PC-9 (cell line): ENCODE measurements at regions of chr4 and their contacts with region 1.

Region 1: GRCh38 chr4:112296949-112297880 is at the start of gene ALPK1:
- DNase-seq: peak; percentile 6 to 87
- H3K4me3 ChIP-seq: peak within 1 kb of the TSS; percentile 59
- H3K27ac ChIP-seq: peak within 1 kb of the TSS; percentile 87
- H3K4me1 ChIP-seq: peaks cover 9% of the 10 kb centered on the region
- H3K27me3 ChIP-seq: no peaks in the 10 kb centered on the region
- CTCF ChIP-seq: no peak
- total RNA-seq, gene ALPK1: 31.0 and 35.4 TPM in 2 replicates

Region 2: DNA sequence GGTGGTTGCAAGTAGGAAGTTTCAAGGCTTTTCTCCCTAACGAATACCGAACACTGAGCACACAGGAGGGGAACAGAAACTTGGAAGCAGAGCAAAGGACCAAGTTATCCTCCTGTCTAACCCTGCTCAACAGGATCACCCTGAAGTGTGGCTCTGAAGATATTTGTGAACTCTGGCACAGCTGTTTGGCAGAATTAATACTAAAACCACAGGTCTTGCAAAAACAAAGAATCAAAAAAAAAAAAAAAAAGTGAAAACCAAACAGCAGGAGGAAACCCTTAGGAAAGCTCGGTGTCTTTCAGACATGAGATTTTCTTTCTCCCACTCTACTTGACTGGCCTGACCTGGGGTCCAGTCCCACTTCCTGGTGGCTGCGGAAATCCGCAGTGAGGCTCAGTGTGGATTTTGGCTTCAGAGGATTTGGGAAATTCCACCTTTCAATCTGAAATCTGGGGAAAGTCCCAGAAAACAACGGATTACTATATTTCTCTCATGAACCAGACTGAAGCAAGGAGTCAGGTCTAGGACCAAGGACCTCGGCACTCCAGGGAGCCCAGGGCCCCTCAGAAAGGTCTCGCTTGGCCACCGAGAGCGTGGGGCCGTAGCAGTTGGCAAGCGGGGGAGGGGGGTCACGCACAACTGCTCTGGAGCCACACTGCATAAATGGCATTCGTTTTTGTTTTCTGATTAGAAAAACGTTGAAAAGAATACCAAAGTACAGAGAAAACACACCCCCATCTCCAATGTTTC is 12.4 kb before region 1 on chr4:
- CTCF ChIA-PET with region 1: no interaction called
- POLR2A ChIA-PET with region 1: interaction called, 23 read pairs
- intact Hi-C with region 1: no loop called
- DNase-seq: peak; percentile 16 to 72
- H3K4me3 ChIP-seq: peak overlapping the region; percentile 79
- H3K27ac ChIP-seq: peak overlapping the region; percentile 40
- H3K4me1 ChIP-seq: peaks cover 15% of the 10 kb centered on the region
- H3K27me3 ChIP-seq: no peaks in the 10 kb centered on the region
- CTCF ChIP-seq: no peak

Region 3: GRCh38 chr4:112652216-112652615 is 355.0 kb after region 1 on chr4:
- CTCF ChIA-PET with region 1: no interaction called
- POLR2A ChIA-PET with region 1: interaction called, 13 read pairs
- intact Hi-C with region 1: no loop called
- DNase-seq: no peak
- H3K4me3 ChIP-seq: no peak overlapping the region
- H3K27ac ChIP-seq: no peak overlapping the region
- H3K4me1 ChIP-seq: no peaks in the 10 kb centered on the region
- H3K27me3 ChIP-seq: no peaks in the 10 kb centered on the region
- CTCF ChIP-seq: no peak